ENCODE measurements at regions of chr19 and their contacts with region 1.

Region 1: GRCh38 chr19:51473009-51473707 is 5.2 kb upstream of the CEACAM18 start:
- DNase-seq: peak; percentile 61 to 95 (median 85)

Region 2: DNA sequence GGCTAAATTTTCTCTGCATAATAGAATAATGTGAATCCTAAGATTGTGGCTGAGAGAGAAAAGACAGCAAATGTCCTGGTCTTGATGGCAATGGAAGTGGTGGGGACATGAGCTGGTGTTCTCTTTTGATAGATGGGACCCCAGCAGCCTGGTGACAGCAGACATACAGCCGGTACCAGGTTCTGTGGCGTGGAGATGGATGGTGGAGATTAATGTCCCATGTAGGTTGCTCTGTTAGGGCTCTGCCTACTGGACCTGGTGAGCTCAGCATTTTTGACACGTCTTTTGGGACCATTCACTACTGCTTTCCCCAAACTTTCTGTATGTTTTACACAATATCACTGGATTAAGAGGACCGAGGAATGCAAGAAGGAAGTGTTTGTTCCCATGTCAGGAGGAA is 181.6 kb after region 1 on chr19:
- intact Hi-C with region 1: loop called (anchors 5 kb)
- DNase-seq: no peak

Measured in head of caudate nucleus (tissue), 42 donors.